Mammary epithelial cell (primary cell): ENCODE measurements at regions of chr2 and their contacts with region 1.

Region 1: GRCh38 chr2:196453613-196454047 is 185.9 kb upstream of the CCDC150 start:
- DNase-seq: peak; percentile 17
- H3K4me3 ChIP-seq: no peak overlapping the region
- H3K27ac ChIP-seq: no peak overlapping the region
- H3K4me1 ChIP-seq: no peaks in the 10 kb centered on the region
- H3K27me3 ChIP-seq: peaks cover 3% of the 10 kb centered on the region
- CTCF ChIP-seq: peak; percentile 62 to 70

Region 2: GRCh38 chr2:196076778-196077568 is 376.7 kb before region 1 on chr2:
- CTCF ChIA-PET with region 1: interaction called, 5 read pairs
- dilution Hi-C with region 1: no loop called
- in situ Hi-C with region 1: no loop called
- intact Hi-C with region 1: loop called (anchors 1 kb)
- DNase-seq: no peak
- H3K4me3 ChIP-seq: no peak overlapping the region
- H3K27ac ChIP-seq: no peak overlapping the region
- H3K4me1 ChIP-seq: no peaks in the 10 kb centered on the region
- H3K27me3 ChIP-seq: no peaks in the 10 kb centered on the region
- CTCF ChIP-seq: no peak

Region 3: GRCh38 chr2:196131384-196131937 is 322.2 kb before region 1 on chr2:
- CTCF ChIA-PET with region 1: no interaction called
- dilution Hi-C with region 1: no loop called
- in situ Hi-C with region 1: no loop called
- intact Hi-C with region 1: loop called (anchors 1 kb)
- DNase-seq: peak; percentile 35
- H3K4me3 ChIP-seq: no peak overlapping the region
- H3K27ac ChIP-seq: no peak overlapping the region
- H3K4me1 ChIP-seq: no peaks in the 10 kb centered on the region
- H3K27me3 ChIP-seq: no peaks in the 10 kb centered on the region
- CTCF ChIP-seq: peak; percentile 57 to 59

Region 4: GRCh38 chr2:196337208-196337953 is 116.2 kb before region 1 on chr2:
- CTCF ChIA-PET with region 1: no interaction called
- dilution Hi-C with region 1: no loop called
- in situ Hi-C with region 1: no loop called
- intact Hi-C with region 1: loop called (anchors 2 kb)
- DNase-seq: peak; percentile 16
- H3K4me3 ChIP-seq: no peak overlapping the region
- H3K27ac ChIP-seq: no peak overlapping the region
- H3K4me1 ChIP-seq: no peaks in the 10 kb centered on the region
- H3K27me3 ChIP-seq: peaks cover 2% of the 10 kb centered on the region
- CTCF ChIP-seq: peak; percentile 25 to 57

Region 5: GRCh38 chr2:196421880-196422279 is 31.8 kb before region 1 on chr2:
- CTCF ChIA-PET with region 1: no interaction called
- dilution Hi-C with region 1: no loop called
- in situ Hi-C with region 1: no loop called
- intact Hi-C with region 1: loop called (anchors 1 kb)
- DNase-seq: no peak
- H3K4me3 ChIP-seq: no peak overlapping the region
- H3K27ac ChIP-seq: no peak overlapping the region
- H3K4me1 ChIP-seq: no peaks in the 10 kb centered on the region
- H3K27me3 ChIP-seq: no peaks in the 10 kb centered on the region
- CTCF ChIP-seq: no peak

Region 6: GRCh38 chr2:196535742-196536141 is 82.1 kb after region 1 on chr2:
- CTCF ChIA-PET with region 1: no interaction called
- dilution Hi-C with region 1: no loop called
- in situ Hi-C with region 1: no loop called
- intact Hi-C with region 1: no loop called
- DNase-seq: no peak
- H3K4me3 ChIP-seq: no peak overlapping the region
- H3K27ac ChIP-seq: no peak overlapping the region
- H3K4me1 ChIP-seq: no peaks in the 10 kb centered on the region
- H3K27me3 ChIP-seq: peaks cover 4% of the 10 kb centered on the region
- CTCF ChIP-seq: peak in 1 of 2 donors; percentile 17

Region 7: DNA sequence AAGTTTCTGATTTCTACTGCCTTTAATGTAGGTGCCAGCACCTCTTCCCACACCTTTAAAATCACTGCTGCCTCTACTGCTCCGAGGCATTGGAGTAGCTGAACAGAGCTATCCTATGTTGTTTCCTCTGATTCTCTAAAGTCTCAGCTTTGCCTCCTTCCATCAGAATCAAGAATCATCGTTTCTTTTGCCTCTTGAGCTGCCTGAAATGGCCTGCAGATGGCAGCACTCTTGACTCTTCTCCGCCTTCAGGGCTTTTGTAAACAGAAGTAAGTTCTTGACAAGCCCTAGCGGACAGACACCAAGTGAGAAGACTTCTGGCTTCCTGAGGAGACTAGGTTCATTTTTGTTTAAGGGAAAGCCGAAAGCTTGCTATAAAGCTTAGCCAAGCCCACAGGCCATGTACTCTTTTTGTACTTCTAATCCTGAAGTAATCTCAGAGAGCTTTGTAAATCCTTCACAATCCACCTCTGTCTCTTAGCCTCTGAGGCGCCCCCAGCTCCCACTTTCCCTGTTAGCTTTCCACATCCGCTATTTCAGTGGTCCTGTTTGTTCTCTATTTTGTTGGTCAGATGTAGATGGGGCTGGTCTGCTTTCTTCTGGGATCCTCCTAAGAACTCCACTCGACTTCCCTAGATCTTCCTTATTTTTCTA is 297.5 kb after region 1 on chr2:
- CTCF ChIA-PET with region 1: no interaction called
- dilution Hi-C with region 1: no loop called
- in situ Hi-C with region 1: no loop called
- intact Hi-C with region 1: loop called (anchors 10 kb)
- DNase-seq: peak; percentile 50
- H3K4me3 ChIP-seq: no peak overlapping the region
- H3K27ac ChIP-seq: no peak overlapping the region
- H3K4me1 ChIP-seq: no peaks in the 10 kb centered on the region
- H3K27me3 ChIP-seq: no peaks in the 10 kb centered on the region
- CTCF ChIP-seq: peak; percentile 84 to 94